Endothelial cell of umbilical vein (primary cell): ENCODE measurements at regions of chr12 and their contacts with region 1.

Region 1: GRCh38 chr12:52023182-52023975 is 16.6 kb downstream of the TAMALIN start:
- DNase-seq: peak; percentile 89
- H3K4me3 ChIP-seq: peak overlapping the region; percentile 2 to 69 (median 43)
- H3K27ac ChIP-seq: peak overlapping the region; percentile 94
- H3K4me1 ChIP-seq: peaks cover 31% of the 10 kb centered on the region
- H3K27me3 ChIP-seq: no peaks in the 10 kb centered on the region
- CTCF ChIP-seq: peak; percentile 98 to 99
- POLR2A ChIP-seq: peak; percentile 39

Region 2: DNA sequence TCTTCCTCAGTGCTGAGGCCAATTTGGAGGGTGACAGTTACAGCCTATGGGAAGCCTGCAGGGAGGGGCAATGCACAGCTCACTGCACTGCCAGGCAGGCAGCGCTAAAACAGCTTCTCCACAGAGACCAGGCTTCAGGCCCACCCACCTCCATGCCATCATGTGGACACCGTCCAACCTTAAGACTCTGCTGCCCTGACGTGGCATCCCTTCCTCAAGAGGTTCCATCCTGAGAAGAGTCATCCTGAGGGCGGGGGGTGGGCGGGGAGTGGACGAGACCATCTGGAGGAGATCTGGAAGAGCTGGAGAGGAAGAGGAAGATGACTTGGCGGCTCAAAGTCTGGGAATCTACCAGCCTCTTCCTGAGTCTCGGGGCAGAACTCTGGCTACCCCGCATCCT is 124.4 kb before region 1 on chr12:
- CTCF ChIA-PET with region 1: interaction called, 15 read pairs
- POLR2A ChIA-PET with region 1: no interaction called
- dilution Hi-C with region 1: no loop called
- intact Hi-C with region 1: no loop called
- DNase-seq: peak; percentile 92
- H3K4me3 ChIP-seq: no peak overlapping the region
- H3K27ac ChIP-seq: peak overlapping the region; percentile 95
- H3K4me1 ChIP-seq: peaks cover 67% of the 10 kb centered on the region
- H3K27me3 ChIP-seq: no peaks in the 10 kb centered on the region
- CTCF ChIP-seq: no peak
- POLR2A ChIP-seq: peak; percentile 12

Region 3: GRCh38 chr12:51984657-51985056 is 38.7 kb before region 1 on chr12:
- CTCF ChIA-PET with region 1: no interaction called
- POLR2A ChIA-PET with region 1: no interaction called
- dilution Hi-C with region 1: no loop called
- intact Hi-C with region 1: no loop called
- DNase-seq: no peak
- H3K4me3 ChIP-seq: no peak overlapping the region
- H3K27ac ChIP-seq: no peak overlapping the region
- H3K4me1 ChIP-seq: peaks cover 12% of the 10 kb centered on the region
- H3K27me3 ChIP-seq: no peaks in the 10 kb centered on the region
- CTCF ChIP-seq: no peak
- POLR2A ChIP-seq: no peak

Region 4: DNA sequence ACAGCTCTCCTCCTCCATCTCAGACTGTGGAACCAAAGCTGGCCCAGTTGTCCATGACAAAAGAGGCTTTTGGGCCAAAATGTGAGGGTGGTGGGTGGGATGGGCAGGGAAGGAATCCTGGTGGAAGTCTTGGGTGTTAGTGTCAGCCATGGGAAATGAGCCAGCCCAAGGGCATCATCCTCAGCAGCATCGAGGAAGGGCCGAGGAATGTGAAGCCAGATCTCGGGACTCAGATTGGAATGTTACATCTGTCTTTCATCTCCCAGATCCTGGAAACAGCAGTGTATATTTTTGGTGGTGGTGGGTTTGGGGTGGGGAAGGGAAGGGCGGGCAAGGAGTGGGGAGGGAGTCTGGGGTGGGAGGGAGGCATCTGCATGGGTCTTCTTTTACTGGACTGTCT is 28.4 kb before region 1 on chr12:
- CTCF ChIA-PET with region 1: interaction called, 946 read pairs
- POLR2A ChIA-PET with region 1: interaction called, 3 read pairs
- dilution Hi-C with region 1: no loop called
- intact Hi-C with region 1: loop called (anchors 1 kb)
- DNase-seq: no peak
- H3K4me3 ChIP-seq: no peak overlapping the region
- H3K27ac ChIP-seq: no peak overlapping the region
- H3K4me1 ChIP-seq: no peaks in the 10 kb centered on the region
- H3K27me3 ChIP-seq: no peaks in the 10 kb centered on the region
- CTCF ChIP-seq: no peak
- POLR2A ChIP-seq: no peak

Region 5: GRCh38 chr12:52044261-52044983 is 21.0 kb after region 1 on chr12:
- CTCF ChIA-PET with region 1: interaction called, 67 read pairs
- POLR2A ChIA-PET with region 1: interaction called, 3 read pairs
- dilution Hi-C with region 1: no loop called
- intact Hi-C with region 1: no loop called
- DNase-seq: peak; percentile 70
- H3K4me3 ChIP-seq: no peak overlapping the region
- H3K27ac ChIP-seq: peak overlapping the region; percentile 75
- H3K4me1 ChIP-seq: peaks cover 25% of the 10 kb centered on the region
- H3K27me3 ChIP-seq: no peaks in the 10 kb centered on the region
- CTCF ChIP-seq: no peak
- POLR2A ChIP-seq: no peak

Region 6: DNA sequence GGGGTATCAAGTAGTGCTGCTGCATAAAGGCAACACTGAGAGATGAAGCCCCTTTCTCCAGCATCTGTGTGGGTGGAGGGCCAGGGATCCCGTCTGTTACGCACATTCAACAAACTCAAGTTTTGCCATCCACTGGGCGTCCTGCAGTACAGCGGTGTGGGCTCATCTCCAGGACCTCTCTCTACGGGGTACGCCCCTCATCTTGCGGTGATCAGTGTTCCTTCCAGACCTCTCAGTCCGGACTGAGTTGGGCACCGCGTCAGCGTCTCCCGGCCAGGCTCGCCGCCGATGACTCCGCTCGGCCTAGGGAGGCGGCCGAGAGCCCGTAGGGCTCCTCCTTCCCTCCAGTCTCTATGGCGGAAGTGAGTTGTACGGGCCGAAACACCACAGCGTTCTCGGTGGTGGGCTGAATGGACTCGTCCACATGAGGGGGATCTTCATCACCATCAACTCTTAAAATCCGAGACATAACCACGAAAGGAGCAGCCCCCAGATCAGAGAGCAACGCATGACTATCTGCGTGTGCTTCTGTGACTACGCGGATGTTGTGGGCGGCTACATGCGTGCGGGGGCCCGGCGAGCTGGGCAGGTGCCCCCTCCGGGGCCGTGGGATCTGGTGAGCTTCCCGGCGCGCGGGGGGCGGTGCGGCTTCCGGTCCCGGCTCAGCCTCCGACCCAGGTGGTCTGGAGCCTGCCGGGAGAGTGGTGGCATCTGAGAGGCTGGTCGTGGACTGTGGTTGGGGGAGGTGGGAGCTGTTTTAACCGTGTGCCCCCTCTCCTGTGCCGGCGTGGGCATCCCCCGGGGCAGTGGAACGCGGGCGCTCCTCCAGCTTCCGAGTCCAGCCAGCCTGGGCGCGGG is 46.2 kb after region 1 on chr12 and contains the start of gene ATG101:
- CTCF ChIA-PET with region 1: interaction called, 156 read pairs
- POLR2A ChIA-PET with region 1: interaction called, 3 read pairs
- dilution Hi-C with region 1: no loop called
- intact Hi-C with region 1: loop called (anchors 1 kb)
- DNase-seq: peak; percentile 95
- H3K4me3 ChIP-seq: peak within 1 kb of the TSS; percentile 69 to 81 (median 73)
- H3K27ac ChIP-seq: peak within 1 kb of the TSS; percentile 93
- H3K4me1 ChIP-seq: peaks cover 12% of the 10 kb centered on the region
- H3K27me3 ChIP-seq: no peaks in the 10 kb centered on the region
- CTCF ChIP-seq: peak; percentile 83 to 90
- POLR2A ChIP-seq: peak; percentile 83
- total RNA-seq, gene ATG101: 41.6 and 43.3 TPM in 2 replicates

Region 7: GRCh38 chr12:52091869-52092268 is 68.5 kb after region 1 on chr12:
- CTCF ChIA-PET with region 1: interaction called, 452 read pairs
- POLR2A ChIA-PET with region 1: no interaction called
- dilution Hi-C with region 1: no loop called
- intact Hi-C with region 1: no loop called
- DNase-seq: no peak
- H3K4me3 ChIP-seq: no peak overlapping the region
- H3K27ac ChIP-seq: no peak overlapping the region
- H3K4me1 ChIP-seq: no peaks in the 10 kb centered on the region
- H3K27me3 ChIP-seq: peaks cover 17% of the 10 kb centered on the region in 2 experiments
- CTCF ChIP-seq: no peak
- POLR2A ChIP-seq: no peak

Region 8: GRCh38 chr12:52879394-52880351 is 856.3 kb after region 1 on chr12:
- CTCF ChIA-PET with region 1: interaction called, 13 read pairs
- POLR2A ChIA-PET with region 1: no interaction called
- dilution Hi-C with region 1: no loop called
- intact Hi-C with region 1: no loop called
- DNase-seq: peak; percentile 83
- H3K4me3 ChIP-seq: peak overlapping the region in 1 of 3 experiments; percentile 23
- H3K27ac ChIP-seq: no peak overlapping the region
- H3K4me1 ChIP-seq: peaks cover 2% of the 10 kb centered on the region
- H3K27me3 ChIP-seq: no peaks in the 10 kb centered on the region
- CTCF ChIP-seq: peak; percentile 77 to 99
- POLR2A ChIP-seq: no peak